ENCODE measurements at regions of chr20 and their contacts with region 1.

Region 1: DNA sequence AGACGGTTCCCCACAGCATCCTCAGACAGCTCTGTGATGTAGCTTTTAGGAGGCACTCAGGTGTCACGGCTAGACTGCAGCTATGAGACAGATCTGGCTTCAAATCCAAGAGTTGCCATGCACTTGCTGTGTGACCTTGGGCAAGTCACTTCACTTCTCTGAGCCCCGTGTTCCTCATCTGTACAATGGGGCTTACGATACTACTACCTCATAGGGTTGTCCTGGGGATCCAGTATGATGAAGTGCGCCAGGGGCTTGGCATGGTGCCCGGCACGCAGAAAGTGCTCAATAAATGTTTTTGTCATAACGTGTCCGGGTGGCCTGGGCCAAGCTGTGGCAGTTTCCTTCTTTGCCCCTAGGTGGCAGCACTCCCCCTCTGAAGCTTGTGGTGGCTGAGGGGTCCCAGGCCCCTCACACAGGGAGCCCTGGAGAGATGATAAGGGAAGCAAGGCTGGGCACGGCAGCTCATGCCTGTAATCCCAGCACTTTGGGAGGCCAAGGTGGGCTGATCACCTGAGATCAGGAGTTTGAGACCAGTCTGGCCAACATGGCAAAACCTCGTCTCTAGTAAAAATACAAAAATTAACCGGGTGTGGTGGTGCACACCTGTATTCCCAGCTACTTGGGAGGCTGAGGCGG is 19.1 kb upstream of the CHMP4B start:
- DNase-seq: no peak
- H3K4me3 ChIP-seq: no peak overlapping the region
- CTCF ChIP-seq: peak; percentile 77

Region 2: DNA sequence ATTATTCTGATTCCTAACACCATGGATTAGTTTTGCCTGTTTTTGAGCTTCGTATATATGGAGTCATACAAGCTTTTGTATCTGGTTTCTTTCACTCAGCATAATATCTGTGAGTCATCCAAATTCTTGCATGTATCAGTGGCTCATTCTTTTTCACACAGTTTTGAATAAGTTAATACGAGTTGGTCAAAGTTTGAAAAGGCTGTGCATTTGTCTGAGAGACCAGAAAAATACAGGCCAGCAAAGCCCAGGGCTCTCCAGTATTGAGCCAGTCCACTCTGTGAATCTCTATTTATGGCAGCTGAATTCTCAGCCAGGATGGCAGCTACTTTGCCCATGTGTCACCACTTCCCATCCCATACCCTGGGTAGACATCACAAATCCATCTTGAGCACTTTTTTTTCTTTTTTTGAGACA is 11.9 kb after region 1 on chr20:
- CTCF ChIA-PET with region 1: interaction called, 47 read pairs
- POLR2A ChIA-PET with region 1: no interaction called
- DNase-seq: no peak
- H3K4me3 ChIP-seq: no peak overlapping the region
- CTCF ChIP-seq: no peak

Region 3: DNA sequence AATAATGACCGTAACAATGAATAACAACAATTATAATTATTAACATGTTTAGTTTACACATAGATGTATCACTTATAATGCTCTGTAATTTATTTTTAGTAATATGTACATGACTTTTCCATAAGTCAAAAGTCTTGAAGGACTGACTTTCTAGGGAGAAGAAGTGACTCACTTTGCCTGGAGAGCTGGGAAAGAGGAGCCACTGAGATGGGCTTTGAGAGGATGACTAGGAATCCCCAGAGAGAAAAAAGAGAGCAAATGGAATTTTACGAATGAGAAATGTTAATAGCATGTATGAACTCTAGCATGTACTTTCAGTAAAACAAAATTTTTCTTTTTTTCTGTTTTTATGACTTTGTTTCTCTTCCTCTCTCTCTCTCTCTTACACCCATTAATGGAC is 133.8 kb after region 1 on chr20:
- CTCF ChIA-PET with region 1: no interaction called
- POLR2A ChIA-PET with region 1: no interaction called
- DNase-seq: no peak
- H3K4me3 ChIP-seq: no peak overlapping the region
- CTCF ChIP-seq: no peak